Activated CD4-positive, alpha-beta T cell treated with anti-CD3 and anti-CD28 coated beads for 36 hours (primary cell): ENCODE measurements at regions of chr1 and their contacts with region 1.

Region 1: DNA sequence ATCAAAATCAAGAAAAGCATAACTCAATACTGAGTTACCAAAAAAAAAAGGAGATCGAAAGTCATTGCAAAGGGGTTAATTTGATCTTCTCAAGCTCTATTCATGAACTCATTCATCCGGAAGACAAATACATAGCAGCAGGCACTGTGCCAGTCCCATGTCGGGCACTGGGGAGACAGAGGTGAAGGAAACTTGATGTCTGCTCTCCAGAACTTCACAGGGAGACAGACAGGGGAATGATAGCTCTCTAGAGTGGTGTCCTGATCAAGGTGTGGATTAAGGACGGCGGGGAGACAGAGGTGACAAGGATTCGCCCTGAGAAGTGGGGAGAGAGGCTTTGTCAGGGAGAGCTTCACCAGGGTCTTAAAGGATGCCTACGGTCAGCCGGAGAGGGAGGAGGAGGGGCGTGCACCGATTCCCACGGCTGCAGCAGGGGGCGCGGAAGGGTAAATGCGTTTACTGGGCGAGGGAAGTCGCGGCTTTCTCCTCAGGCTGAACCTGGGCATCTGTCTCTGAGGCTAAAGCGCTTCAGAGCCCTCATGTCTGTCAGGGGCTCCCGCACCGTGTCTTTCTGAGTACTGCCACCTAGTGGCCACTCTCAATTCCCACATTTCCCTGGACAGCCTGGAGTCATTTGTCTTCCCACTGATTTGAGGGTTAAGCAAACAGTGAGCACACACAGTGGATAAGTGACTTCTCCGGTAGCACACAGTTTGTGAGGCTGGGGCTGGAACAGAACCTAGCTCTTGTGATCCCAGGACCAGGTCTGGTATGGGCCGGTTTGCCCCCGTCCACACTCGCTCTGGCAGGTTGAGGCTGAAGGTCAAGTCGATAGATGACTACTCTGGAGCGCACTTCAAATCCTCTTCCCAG is 152.8 kb downstream of the TENT5C start:
- DNase-seq: peak; percentile 81
- ATAC-seq: peak; percentile 95
- H3K4me3 Mint-ChIP-seq: peak overlapping the region; percentile 63
- H3K27ac Mint-ChIP-seq: peak overlapping the region; percentile 52
- H3K4me1 Mint-ChIP-seq: peaks cover 9% of the 10 kb centered on the region
- H3K27me3 Mint-ChIP-seq: peaks cover 15% of the 10 kb centered on the region

Region 2: GRCh38 chr1:117067533-117068370 is 690.9 kb before region 1 on chr1:
- CTCF ChIA-PET with region 1: interaction called, 3 read pairs
- POLR2A ChIA-PET with region 1: no interaction called
- intact Hi-C with region 1: loop called in 1 of 2 experiments (anchors 5 kb)
- DNase-seq: peak; percentile 65
- ATAC-seq: peak; percentile 65
- H3K4me3 Mint-ChIP-seq: no peak overlapping the region
- H3K27ac Mint-ChIP-seq: no peak overlapping the region
- H3K4me1 Mint-ChIP-seq: peaks cover 36% of the 10 kb centered on the region
- H3K27me3 Mint-ChIP-seq: no peaks in the 10 kb centered on the region

Region 3: DNA sequence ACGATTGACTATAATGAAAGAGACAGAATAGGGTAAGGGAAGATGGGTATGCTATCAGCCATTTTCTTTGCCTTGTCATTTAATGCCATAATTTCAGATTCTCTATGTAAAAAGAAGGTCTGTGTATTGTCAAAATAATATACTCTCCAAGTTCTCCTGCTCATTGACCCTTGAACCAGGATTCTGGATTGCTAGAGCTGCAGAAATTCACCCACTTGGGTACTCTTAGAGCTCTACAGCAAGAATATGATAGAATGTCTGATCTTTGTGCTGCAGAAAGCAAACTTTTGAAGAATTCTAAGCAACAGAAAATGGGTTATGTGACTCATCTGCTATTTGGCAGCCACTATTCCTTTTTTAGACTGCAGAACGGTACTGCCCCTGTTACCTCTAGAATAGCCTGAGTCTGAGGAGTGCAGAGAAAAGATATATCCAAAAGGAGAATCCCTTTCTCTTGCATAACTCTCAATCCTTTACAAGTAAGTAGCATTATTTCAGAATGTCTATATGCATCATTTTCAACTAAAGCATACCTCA is 231.0 kb before region 1 on chr1:
- CTCF ChIA-PET with region 1: interaction called, 164 read pairs
- POLR2A ChIA-PET with region 1: no interaction called
- intact Hi-C with region 1: no loop called
- DNase-seq: no peak
- ATAC-seq: peak; percentile 37
- H3K4me3 Mint-ChIP-seq: no peak overlapping the region
- H3K27ac Mint-ChIP-seq: no peak overlapping the region
- H3K4me1 Mint-ChIP-seq: peaks cover 31% of the 10 kb centered on the region
- H3K27me3 Mint-ChIP-seq: no peaks in the 10 kb centered on the region

Region 4: DNA sequence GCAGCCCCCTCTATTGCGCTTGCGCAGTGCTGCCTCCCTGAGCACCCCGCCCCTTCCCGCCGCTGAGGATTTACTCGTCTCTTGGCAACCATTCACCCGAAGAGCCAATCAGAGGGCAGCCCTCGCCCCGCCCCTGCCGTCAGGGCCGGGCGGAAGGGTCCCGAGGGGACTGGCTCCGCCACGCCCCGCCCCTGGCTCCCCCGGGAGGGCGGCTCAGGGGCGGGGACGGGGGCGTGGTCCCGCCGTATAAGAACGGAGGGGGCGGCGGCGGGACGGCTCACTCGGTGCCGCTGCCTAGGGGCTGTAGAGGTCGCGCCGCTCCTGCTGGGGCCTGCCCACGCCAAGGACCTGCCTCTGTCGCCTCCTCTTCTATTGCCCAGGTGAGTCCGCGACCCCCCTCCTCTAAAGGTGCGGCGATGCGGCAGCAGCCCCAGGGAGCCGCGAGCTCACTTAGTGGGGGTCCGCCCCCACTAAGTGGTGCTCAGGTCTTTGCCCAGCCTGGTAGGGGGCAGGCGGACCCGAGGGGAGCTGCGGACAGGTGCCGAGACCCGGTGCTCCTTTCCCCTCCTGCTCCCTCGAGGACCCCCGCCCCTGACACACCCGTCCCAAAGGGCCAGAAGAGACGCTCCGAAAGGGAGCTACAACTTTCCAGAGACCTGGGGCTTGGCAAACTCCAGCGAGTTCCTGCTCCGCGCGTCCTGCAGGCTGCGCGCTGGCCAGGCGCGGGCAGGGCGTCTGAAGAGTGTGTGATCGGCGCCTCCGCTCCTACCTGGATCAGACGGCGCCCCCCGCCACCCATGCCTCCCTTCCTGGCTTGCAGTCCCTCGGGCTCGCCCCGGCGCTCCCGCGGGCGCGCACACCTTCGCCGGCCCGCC is 152.7 kb before region 1 on chr1 and contains the start of gene TENT5C:
- CTCF ChIA-PET with region 1: interaction called, 3 read pairs
- POLR2A ChIA-PET with region 1: no interaction called
- intact Hi-C with region 1: loop called (anchors 2 to 5 kb)
- DNase-seq: peak; percentile 98
- ATAC-seq: peak; percentile 96
- H3K4me3 Mint-ChIP-seq: peak within 1 kb of the TSS; percentile 92
- H3K27ac Mint-ChIP-seq: peak within 1 kb of the TSS; percentile 86
- H3K4me1 Mint-ChIP-seq: peaks cover 37% of the 10 kb centered on the region
- H3K27me3 Mint-ChIP-seq: peaks cover 2% of the 10 kb centered on the region
- total RNA-seq, gene TENT5C: 6.0 to 6.4 TPM

Region 5: GRCh38 chr1:117695796-117696490 is 62.7 kb before region 1 on chr1:
- CTCF ChIA-PET with region 1: interaction called, 17 read pairs
- POLR2A ChIA-PET with region 1: no interaction called
- intact Hi-C with region 1: no loop called
- DNase-seq: no peak
- ATAC-seq: no peak
- H3K4me3 Mint-ChIP-seq: no peak overlapping the region
- H3K27ac Mint-ChIP-seq: no peak overlapping the region
- H3K4me1 Mint-ChIP-seq: no peaks in the 10 kb centered on the region
- H3K27me3 Mint-ChIP-seq: peaks cover 9% of the 10 kb centered on the region

Region 6: DNA sequence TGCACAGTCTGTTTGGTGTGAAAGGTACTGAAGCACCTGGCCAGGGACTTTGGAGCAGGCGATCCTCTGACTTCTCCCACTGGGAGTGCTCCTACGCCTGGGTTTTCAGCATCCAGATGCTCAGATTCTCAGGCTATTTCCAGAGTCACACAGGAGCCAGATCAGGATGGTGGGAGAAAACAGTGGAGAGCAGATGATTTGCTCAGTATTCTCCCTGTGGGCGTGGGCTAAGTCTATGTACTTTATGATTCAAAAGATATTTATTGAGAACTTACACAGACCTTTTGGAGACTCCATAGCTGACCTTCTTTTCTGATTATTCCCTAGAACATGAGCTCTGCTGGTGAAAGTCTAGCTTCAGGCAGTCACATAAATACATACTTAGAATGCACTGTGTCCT is 18.2 kb before region 1 on chr1:
- CTCF ChIA-PET with region 1: interaction called, 21 read pairs
- POLR2A ChIA-PET with region 1: no interaction called
- intact Hi-C with region 1: no loop called
- DNase-seq: no peak
- ATAC-seq: no peak
- H3K4me3 Mint-ChIP-seq: no peak overlapping the region
- H3K27ac Mint-ChIP-seq: no peak overlapping the region
- H3K4me1 Mint-ChIP-seq: peaks cover under 1% of the 10 kb centered on the region
- H3K27me3 Mint-ChIP-seq: no peaks in the 10 kb centered on the region